Activated CD8-positive, alpha-beta T cell treated with anti-CD3 and anti-CD28 coated beads for 36 hours (primary cell): ENCODE measurements at regions of chr3 and their contacts with region 1.

Region 1: GRCh38 chr3:143016321-143016972 is 15.1 kb downstream of the U2SURP start:
- DNase-seq: no peak
- ATAC-seq: no peak
- H3K4me3 Mint-ChIP-seq: no peak overlapping the region
- H3K27ac Mint-ChIP-seq: no peak overlapping the region
- H3K4me1 Mint-ChIP-seq: peaks cover 22% of the 10 kb centered on the region
- H3K27me3 Mint-ChIP-seq: no peaks in the 10 kb centered on the region
- CTCF ChIP-seq: peak; percentile 66

Region 2: GRCh38 chr3:142886940-142887339 is 129.5 kb before region 1 on chr3:
- CTCF ChIA-PET with region 1: no interaction called
- POLR2A ChIA-PET with region 1: no interaction called
- intact Hi-C with region 1: no loop called
- DNase-seq: no peak
- ATAC-seq: no peak
- H3K4me3 Mint-ChIP-seq: no peak overlapping the region
- H3K27ac Mint-ChIP-seq: no peak overlapping the region
- H3K4me1 Mint-ChIP-seq: peaks cover 3% of the 10 kb centered on the region
- H3K27me3 Mint-ChIP-seq: peaks cover 48% of the 10 kb centered on the region
- CTCF ChIP-seq: no peak

Region 3: GRCh38 chr3:142975316-142975995 is 41.0 kb before region 1 on chr3:
- CTCF ChIA-PET with region 1: no interaction called
- POLR2A ChIA-PET with region 1: no interaction called
- intact Hi-C with region 1: no loop called
- DNase-seq: no peak
- ATAC-seq: no peak
- H3K4me3 Mint-ChIP-seq: no peak overlapping the region
- H3K27ac Mint-ChIP-seq: no peak overlapping the region
- H3K4me1 Mint-ChIP-seq: no peaks in the 10 kb centered on the region
- H3K27me3 Mint-ChIP-seq: peaks cover 10% of the 10 kb centered on the region
- CTCF ChIP-seq: no peak

Region 4: DNA sequence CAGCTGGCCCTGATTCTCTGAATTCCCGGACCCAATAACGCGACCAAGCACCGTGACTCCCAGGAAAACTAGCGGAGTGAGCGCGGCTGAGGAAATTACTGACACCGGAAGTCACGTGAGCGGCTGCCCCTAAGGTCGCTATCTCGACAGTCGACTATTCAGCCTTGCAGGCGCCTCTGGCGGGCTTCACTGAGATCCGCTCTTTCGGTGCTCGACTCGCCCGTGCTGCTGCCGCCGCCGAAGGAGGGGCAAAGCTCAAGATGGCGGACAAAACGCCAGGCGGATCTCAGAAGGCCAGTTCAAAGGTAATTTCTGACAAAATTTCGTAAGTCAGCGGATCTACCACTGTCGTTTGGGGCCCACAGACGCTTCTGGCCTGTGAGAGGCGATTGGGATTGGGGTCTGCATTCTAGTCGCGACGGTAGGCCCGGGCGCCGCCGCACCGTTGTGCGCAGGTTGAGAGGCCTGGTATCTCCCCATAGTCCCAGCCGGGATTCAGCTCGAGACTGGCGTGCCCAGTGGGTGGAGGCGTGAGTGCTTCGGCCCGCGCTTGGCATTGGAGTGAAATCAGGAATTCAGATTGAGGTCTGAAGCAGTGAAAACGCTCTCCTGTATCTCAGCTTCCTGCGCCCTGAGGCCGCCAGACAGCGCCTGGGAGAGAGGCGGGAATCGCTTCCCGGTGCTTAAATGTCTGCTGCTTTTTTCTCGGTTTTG is 14.9 kb before region 1 on chr3 and contains the start of gene U2SURP:
- CTCF ChIA-PET with region 1: interaction called, 18 read pairs
- POLR2A ChIA-PET with region 1: interaction called, 30 read pairs
- intact Hi-C with region 1: no loop called
- DNase-seq: peak; percentile 96
- ATAC-seq: peak; percentile 90
- H3K4me3 Mint-ChIP-seq: peak within 1 kb of the TSS; percentile 92
- H3K27ac Mint-ChIP-seq: peak within 1 kb of the TSS; percentile 100
- H3K4me1 Mint-ChIP-seq: peaks cover 29% of the 10 kb centered on the region
- H3K27me3 Mint-ChIP-seq: peaks cover 4% of the 10 kb centered on the region
- CTCF ChIP-seq: no peak
- total RNA-seq, gene U2SURP: 160 to 174 TPM

Region 5: DNA sequence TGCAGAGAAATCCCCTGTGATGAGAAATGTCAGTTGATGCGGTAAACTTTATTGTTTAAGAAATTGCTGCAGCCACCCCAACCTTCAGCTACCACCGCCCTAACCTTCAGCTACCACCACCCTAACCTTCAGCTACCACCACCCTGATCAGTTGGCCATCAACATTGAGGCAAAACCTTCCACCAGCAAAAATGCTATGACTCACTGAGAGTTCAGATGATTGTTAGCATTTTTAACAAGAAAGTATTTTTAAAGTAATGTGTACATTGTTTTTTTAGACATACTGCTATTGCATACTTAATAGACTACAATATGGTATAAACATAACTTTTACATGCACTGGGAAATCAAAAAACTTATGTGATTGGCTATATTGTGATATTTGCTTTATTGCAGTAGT is 14.9 kb after region 1 on chr3:
- CTCF ChIA-PET with region 1: interaction called, 10 read pairs
- POLR2A ChIA-PET with region 1: no interaction called
- intact Hi-C with region 1: no loop called
- DNase-seq: no peak
- ATAC-seq: no peak
- H3K4me3 Mint-ChIP-seq: no peak overlapping the region
- H3K27ac Mint-ChIP-seq: no peak overlapping the region
- H3K4me1 Mint-ChIP-seq: peaks cover 9% of the 10 kb centered on the region
- H3K27me3 Mint-ChIP-seq: no peaks in the 10 kb centered on the region
- CTCF ChIP-seq: no peak

Region 6: GRCh38 chr3:143103652-143104051 is 87.2 kb after region 1 on chr3:
- CTCF ChIA-PET with region 1: no interaction called
- POLR2A ChIA-PET with region 1: no interaction called
- intact Hi-C with region 1: no loop called
- DNase-seq: peak; percentile 33
- ATAC-seq: peak; percentile 51
- H3K4me3 Mint-ChIP-seq: no peak overlapping the region
- H3K27ac Mint-ChIP-seq: no peak overlapping the region
- H3K4me1 Mint-ChIP-seq: peaks cover 3% of the 10 kb centered on the region
- H3K27me3 Mint-ChIP-seq: peaks cover 5% of the 10 kb centered on the region
- CTCF ChIP-seq: no peak